ENCODE measurements at regions of chr3 and their contacts with region 1.

Region 1: GRCh38 chr3:108406661-108407206 is 103.7 kb downstream of the MYH15 start:
- DNase-seq: peak; percentile 78
- ATAC-seq: peak; percentile 75
- H3K4me3 ChIP-seq: peak overlapping the region in 1 of 5 experiments; percentile 3
- H3K4me3 Mint-ChIP-seq: peak overlapping the region; percentile 54
- H3K27ac ChIP-seq: peak overlapping the region; percentile 16 to 49
- H3K27ac Mint-ChIP-seq: peak overlapping the region; percentile 82
- H3K4me1 ChIP-seq: peaks cover 26 to 27% of the 10 kb centered on the region in 2 donors
- H3K4me1 Mint-ChIP-seq: peaks cover 31% of the 10 kb centered on the region
- H3K27me3 ChIP-seq: no peaks in the 10 kb centered on the region
- H3K27me3 Mint-ChIP-seq: no peaks in the 10 kb centered on the region
- CTCF ChIP-seq: peak; percentile 79

Region 2: DNA sequence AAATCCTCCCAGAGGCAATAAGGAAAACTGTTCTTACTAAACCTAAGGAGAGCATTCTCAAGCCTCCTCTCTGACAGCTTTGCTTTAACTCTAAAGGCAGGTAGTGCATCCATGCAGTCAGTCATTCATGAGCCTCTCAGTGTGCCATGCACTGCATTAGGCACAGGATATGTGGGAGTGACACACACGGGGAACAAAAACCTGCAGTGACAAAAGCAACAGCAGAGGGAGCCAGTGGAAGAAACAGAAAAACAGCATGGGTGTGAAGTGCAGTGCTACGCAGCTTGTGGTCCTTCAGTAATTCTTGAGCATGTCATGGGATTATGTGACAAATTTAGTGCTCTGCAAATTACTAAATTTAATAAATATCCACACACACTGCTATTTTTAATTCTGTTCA is 653.3 kb before region 1 on chr3:
- CTCF ChIA-PET with region 1: no interaction called
- POLR2A ChIA-PET with region 1: no interaction called
- intact Hi-C with region 1: loop called (anchors 10 kb)
- DNase-seq: peak; percentile 22
- ATAC-seq: no peak
- H3K4me3 ChIP-seq: no peak overlapping the region
- H3K4me3 Mint-ChIP-seq: no peak overlapping the region
- H3K27ac ChIP-seq: no peak overlapping the region
- H3K27ac Mint-ChIP-seq: no peak overlapping the region
- H3K4me1 ChIP-seq: no peaks in the 10 kb centered on the region
- H3K4me1 Mint-ChIP-seq: no peaks in the 10 kb centered on the region
- H3K27me3 ChIP-seq: no peaks in the 10 kb centered on the region
- H3K27me3 Mint-ChIP-seq: no peaks in the 10 kb centered on the region
- CTCF ChIP-seq: no peak

Region 3: GRCh38 chr3:107938143-107938542 is 468.6 kb before region 1 on chr3:
- CTCF ChIA-PET with region 1: interaction called, 10 read pairs
- POLR2A ChIA-PET with region 1: no interaction called
- intact Hi-C with region 1: loop called (anchors 1 kb)
- DNase-seq: peak; percentile 46
- ATAC-seq: no peak
- H3K4me3 ChIP-seq: no peak overlapping the region
- H3K4me3 Mint-ChIP-seq: no peak overlapping the region
- H3K27ac ChIP-seq: no peak overlapping the region
- H3K27ac Mint-ChIP-seq: no peak overlapping the region
- H3K4me1 ChIP-seq: no peaks in the 10 kb centered on the region
- H3K4me1 Mint-ChIP-seq: peaks cover 2% of the 10 kb centered on the region
- H3K27me3 ChIP-seq: no peaks in the 10 kb centered on the region
- H3K27me3 Mint-ChIP-seq: peaks cover 3% of the 10 kb centered on the region
- CTCF ChIP-seq: peak; percentile 13

Region 4: GRCh38 chr3:108090701-108091451 is 315.9 kb before region 1 on chr3 and contains the start of gene CD47:
- CTCF ChIA-PET with region 1: no interaction called
- POLR2A ChIA-PET with region 1: no interaction called
- intact Hi-C with region 1: loop called (anchors 2 kb)
- DNase-seq: peak; percentile 96
- ATAC-seq: peak; percentile 76
- H3K4me3 ChIP-seq: peak within 1 kb of the TSS; percentile 76 to 98 (median 96)
- H3K4me3 Mint-ChIP-seq: peak within 1 kb of the TSS; percentile 99
- H3K27ac ChIP-seq: peak within 1 kb of the TSS; percentile 89 to 97
- H3K27ac Mint-ChIP-seq: peak within 1 kb of the TSS; percentile 99
- H3K4me1 ChIP-seq: peaks cover 35 to 40% of the 10 kb centered on the region in 2 donors
- H3K4me1 Mint-ChIP-seq: peaks cover 25% of the 10 kb centered on the region
- H3K27me3 ChIP-seq: no peaks in the 10 kb centered on the region
- H3K27me3 Mint-ChIP-seq: no peaks in the 10 kb centered on the region
- CTCF ChIP-seq: no peak
- total RNA-seq, gene CD47: 259 and 260 TPM in 2 replicates

Region 5: GRCh38 chr3:108359011-108359410 is 47.7 kb before region 1 on chr3:
- CTCF ChIA-PET with region 1: no interaction called
- POLR2A ChIA-PET with region 1: no interaction called
- intact Hi-C with region 1: no loop called
- DNase-seq: no peak
- ATAC-seq: no peak
- H3K4me3 ChIP-seq: no peak overlapping the region
- H3K4me3 Mint-ChIP-seq: no peak overlapping the region
- H3K27ac ChIP-seq: no peak overlapping the region
- H3K27ac Mint-ChIP-seq: no peak overlapping the region
- H3K4me1 ChIP-seq: peaks cover 0 to 7% of the 10 kb centered on the region in 2 donors
- H3K4me1 Mint-ChIP-seq: peaks cover 7% of the 10 kb centered on the region
- H3K27me3 ChIP-seq: no peaks in the 10 kb centered on the region
- H3K27me3 Mint-ChIP-seq: peaks cover 3% of the 10 kb centered on the region
- CTCF ChIP-seq: no peak

Region 6: GRCh38 chr3:108518895-108519294 is 112.2 kb after region 1 on chr3:
- CTCF ChIA-PET with region 1: no interaction called
- POLR2A ChIA-PET with region 1: no interaction called
- intact Hi-C with region 1: no loop called
- DNase-seq: no peak
- ATAC-seq: no peak
- H3K4me3 ChIP-seq: no peak overlapping the region
- H3K4me3 Mint-ChIP-seq: no peak overlapping the region
- H3K27ac ChIP-seq: no peak overlapping the region
- H3K27ac Mint-ChIP-seq: no peak overlapping the region
- H3K4me1 ChIP-seq: no peaks in the 10 kb centered on the region
- H3K4me1 Mint-ChIP-seq: no peaks in the 10 kb centered on the region
- H3K27me3 ChIP-seq: no peaks in the 10 kb centered on the region
- H3K27me3 Mint-ChIP-seq: peaks cover 15% of the 10 kb centered on the region
- CTCF ChIP-seq: no peak

Region 7: GRCh38 chr3:108589146-108589997 is 182.6 kb after region 1 on chr3 and contains the starts of genes CIP2A and DZIP3:
- CTCF ChIA-PET with region 1: interaction called, 3 read pairs
- POLR2A ChIA-PET with region 1: no interaction called
- intact Hi-C with region 1: loop called (anchors 1 kb)
- DNase-seq: peak; percentile 97
- ATAC-seq: peak; percentile 86
- H3K4me3 ChIP-seq: peak within 1 kb of the TSS; percentile 77 to 99 (median 94)
- H3K4me3 Mint-ChIP-seq: peak within 1 kb of the TSS; percentile 99
- H3K27ac ChIP-seq: peak within 1 kb of the TSS; percentile 96 to 99
- H3K27ac Mint-ChIP-seq: peak within 1 kb of the TSS; percentile 100
- H3K4me1 ChIP-seq: peaks cover 12 to 16% of the 10 kb centered on the region in 2 donors
- H3K4me1 Mint-ChIP-seq: peaks cover 17% of the 10 kb centered on the region
- H3K27me3 ChIP-seq: no peaks in the 10 kb centered on the region
- H3K27me3 Mint-ChIP-seq: no peaks in the 10 kb centered on the region
- CTCF ChIP-seq: no peak
- total RNA-seq, gene CIP2A: 8.8 and 11.0 TPM in 2 replicates
- total RNA-seq, gene DZIP3: 10.5 and 11.1 TPM in 2 replicates

Region 8: DNA sequence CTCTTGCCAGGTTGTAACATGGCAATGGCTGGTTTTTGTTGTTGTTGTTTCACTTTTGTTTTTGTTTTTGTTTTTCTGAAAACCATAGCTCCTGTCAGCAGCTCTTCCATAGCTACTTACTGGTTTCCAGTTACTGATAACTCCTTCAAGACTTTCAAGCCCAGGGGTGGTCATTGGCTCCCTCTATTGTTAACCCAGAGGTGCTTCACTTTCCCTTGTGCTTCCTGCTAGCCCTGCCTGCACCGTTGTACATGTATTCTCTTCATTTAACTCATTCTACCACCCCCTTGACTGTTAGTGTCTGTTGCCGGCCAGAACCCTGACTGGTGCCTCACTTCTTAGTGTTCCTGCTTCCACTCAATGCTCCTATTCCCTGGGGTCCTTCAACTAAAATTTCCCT is 411.7 kb after region 1 on chr3:
- CTCF ChIA-PET with region 1: no interaction called
- POLR2A ChIA-PET with region 1: no interaction called
- intact Hi-C with region 1: no loop called
- DNase-seq: no peak
- ATAC-seq: no peak
- H3K4me3 ChIP-seq: no peak overlapping the region
- H3K4me3 Mint-ChIP-seq: no peak overlapping the region
- H3K27ac ChIP-seq: no peak overlapping the region
- H3K27ac Mint-ChIP-seq: no peak overlapping the region
- H3K4me1 ChIP-seq: no peaks in the 10 kb centered on the region
- H3K4me1 Mint-ChIP-seq: no peaks in the 10 kb centered on the region
- H3K27me3 ChIP-seq: no peaks in the 10 kb centered on the region
- H3K27me3 Mint-ChIP-seq: peaks cover 3% of the 10 kb centered on the region
- CTCF ChIP-seq: no peak